Naive thymus-derived CD4-positive, alpha-beta T cell (primary cell): ENCODE measurements at regions of chr22 and their contacts with region 1.

Region 1: DNA sequence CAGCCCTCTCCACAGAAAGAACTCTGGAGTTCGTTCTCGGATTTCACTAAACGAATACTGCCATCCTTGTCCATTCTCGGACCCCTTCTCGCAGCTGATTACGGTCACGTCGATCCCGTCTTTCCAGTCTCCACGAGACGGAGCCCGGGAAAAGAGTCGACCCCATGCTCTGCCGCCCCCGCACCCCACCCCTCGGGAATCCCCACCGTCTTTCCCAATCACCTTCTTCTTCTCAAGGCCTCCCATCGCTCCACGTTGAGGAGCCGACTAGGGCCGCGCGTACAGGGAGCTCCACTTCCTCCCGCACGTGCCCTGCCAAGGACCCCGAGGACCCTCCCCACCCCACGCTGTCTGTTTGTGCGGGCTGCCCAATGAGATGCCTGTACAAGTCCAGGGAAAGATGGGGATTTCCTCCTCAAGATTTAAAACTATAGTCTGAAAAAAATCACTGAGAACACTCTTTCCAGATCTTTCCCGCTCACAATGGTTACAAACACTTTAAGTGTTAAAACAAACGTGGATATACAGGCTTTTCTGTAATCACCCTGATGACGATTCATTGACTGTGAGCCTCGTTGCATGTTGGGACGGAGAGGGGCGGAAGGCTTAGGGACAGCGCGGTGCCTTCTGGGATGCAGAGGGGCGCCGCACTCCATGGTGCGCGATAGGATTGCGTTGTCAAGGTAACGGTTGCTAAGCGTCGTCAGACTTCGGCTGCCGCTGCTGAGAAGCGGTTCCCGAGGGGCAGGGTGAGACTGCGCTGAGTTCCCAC is at the start of gene PES1:
- DNase-seq: peak; percentile 80 to 98 (median 96)
- ATAC-seq: peak; percentile 99
- H3K4me3 ChIP-seq: peak within 1 kb of the TSS; percentile 85
- H3K4me3 Mint-ChIP-seq: no peak within 1 kb of the TSS
- H3K27ac ChIP-seq: peak within 1 kb of the TSS; percentile 85
- H3K27ac Mint-ChIP-seq: no peak within 1 kb of the TSS
- H3K4me1 ChIP-seq: peaks cover 8 to 12% of the 10 kb centered on the region in 2 donors
- H3K4me1 Mint-ChIP-seq: peaks cover 0 to 12% (median 0%) of the 10 kb centered on the region in 7 donors
- H3K27me3 ChIP-seq: no peaks in the 10 kb centered on the region
- H3K27me3 Mint-ChIP-seq: peaks cover 0 to 23% (median 0%) of the 10 kb centered on the region in 5 donors
- total RNA-seq, gene PES1: 40.6 to 84.2 (median 56.3) TPM

Region 2: DNA sequence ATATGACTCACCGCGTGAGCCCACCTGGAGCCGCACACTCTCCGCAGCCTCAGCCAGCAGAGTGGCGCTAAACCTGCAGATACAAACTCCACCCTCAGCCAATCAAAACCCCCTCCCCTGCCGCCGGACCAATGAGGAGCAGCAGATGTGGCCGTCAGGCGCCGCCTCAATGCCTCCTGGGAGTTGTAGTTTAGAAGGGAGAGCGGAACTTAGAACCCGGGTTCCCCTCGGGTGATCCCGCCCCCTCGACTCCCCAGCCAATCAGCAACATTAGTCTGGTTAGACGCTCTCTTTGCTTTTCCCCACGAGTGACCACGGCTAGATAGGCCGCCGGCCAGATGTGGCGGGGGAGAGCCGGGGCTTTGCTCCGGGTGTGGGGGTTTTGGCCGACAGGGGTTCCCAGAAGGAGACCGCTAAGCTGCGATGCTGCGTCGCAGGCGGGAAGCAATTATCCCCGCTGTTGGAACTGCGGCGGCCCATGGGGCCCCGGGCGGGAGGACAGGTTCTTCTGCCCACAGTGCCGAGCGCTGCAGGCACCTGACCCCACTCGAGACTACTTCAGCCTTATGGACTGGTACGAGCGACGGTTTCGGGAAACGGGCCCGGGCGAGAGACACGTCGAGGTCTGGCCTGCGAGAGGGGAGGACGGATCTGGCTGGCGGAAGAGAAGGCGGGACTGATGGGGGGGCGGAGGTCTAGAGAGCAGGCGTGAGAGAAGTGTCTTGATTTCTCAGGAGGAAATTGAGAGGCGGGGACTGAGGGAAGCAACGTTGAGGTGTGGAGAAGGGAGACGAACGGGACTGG is 1849.8 kb before region 1 on chr22 and contains the starts of genes CHEK2 and HSCB:
- CTCF ChIA-PET with region 1: no interaction called
- POLR2A ChIA-PET with region 1: no interaction called
- intact Hi-C with region 1: loop called (anchors 5 kb)
- DNase-seq: peak; percentile 80 to 99 (median 96)
- ATAC-seq: peak; percentile 98
- H3K4me3 ChIP-seq: peak within 1 kb of the TSS; percentile 99
- H3K4me3 Mint-ChIP-seq: peak within 1 kb of the TSS; percentile 81 to 94 (median 87)
- H3K27ac ChIP-seq: peak within 1 kb of the TSS; percentile 90
- H3K27ac Mint-ChIP-seq: peak within 1 kb of the TSS; percentile 79 to 93 (median 89)
- H3K4me1 ChIP-seq: peaks cover 3 to 9% of the 10 kb centered on the region in 2 donors
- H3K4me1 Mint-ChIP-seq: peaks cover 14 to 49% (median 38%) of the 10 kb centered on the region in 7 donors
- H3K27me3 ChIP-seq: no peaks in the 10 kb centered on the region
- H3K27me3 Mint-ChIP-seq: no peaks in the 10 kb centered on the region
- total RNA-seq, gene CHEK2: 8.4 to 36.7 (median 10.6) TPM
- total RNA-seq, gene HSCB: 8.2 to 10.9 (median 9.0) TPM

Region 3: DNA sequence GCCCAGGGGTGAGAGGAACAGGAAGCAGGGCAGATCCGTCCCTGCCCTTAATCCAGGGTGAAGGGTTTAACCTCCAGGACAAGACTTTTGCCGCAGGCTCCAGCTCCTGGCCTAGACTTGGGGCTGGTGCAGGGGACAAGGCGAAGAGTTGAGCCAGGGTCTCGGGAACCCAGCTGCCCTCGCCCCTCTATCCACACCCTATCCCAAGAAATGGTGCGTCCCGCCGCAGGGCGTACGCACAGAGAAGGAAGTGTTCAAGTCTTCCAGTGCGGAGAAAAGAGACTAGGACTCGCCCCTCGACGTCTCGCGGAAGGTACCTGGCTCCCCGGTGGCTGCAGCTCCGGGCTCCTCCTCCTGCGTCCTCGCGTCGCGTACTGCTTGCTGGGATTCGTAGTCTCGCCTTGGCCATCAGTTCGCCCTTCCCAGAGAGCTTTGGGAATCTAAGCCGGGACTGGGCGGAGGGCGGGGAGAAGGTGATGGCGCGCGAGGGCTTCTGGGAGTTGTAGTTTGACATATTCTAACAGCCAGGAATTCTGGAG is 825.1 kb before region 1 on chr22 and contains the start of gene ZMAT5:
- CTCF ChIA-PET with region 1: no interaction called
- POLR2A ChIA-PET with region 1: no interaction called
- intact Hi-C with region 1: loop called in 1 of 2 experiments (anchors 1 kb)
- DNase-seq: peak; percentile 68 to 96 (median 93)
- ATAC-seq: peak; percentile 98
- H3K4me3 ChIP-seq: peak within 1 kb of the TSS; percentile 84
- H3K4me3 Mint-ChIP-seq: peak within 1 kb of the TSS; percentile 95 to 100 (median 99)
- H3K27ac ChIP-seq: peak within 1 kb of the TSS; percentile 88
- H3K27ac Mint-ChIP-seq: peak within 1 kb of the TSS; percentile 92 to 99 (median 97)
- H3K4me1 ChIP-seq: peaks cover 16 to 17% of the 10 kb centered on the region in 2 donors
- H3K4me1 Mint-ChIP-seq: peaks cover 21 to 59% (median 39%) of the 10 kb centered on the region in 7 donors
- H3K27me3 ChIP-seq: no peaks in the 10 kb centered on the region
- H3K27me3 Mint-ChIP-seq: no peaks in the 10 kb centered on the region
- total RNA-seq, gene ZMAT5: 12.9 to 26.4 (median 14.7) TPM

Region 4: DNA sequence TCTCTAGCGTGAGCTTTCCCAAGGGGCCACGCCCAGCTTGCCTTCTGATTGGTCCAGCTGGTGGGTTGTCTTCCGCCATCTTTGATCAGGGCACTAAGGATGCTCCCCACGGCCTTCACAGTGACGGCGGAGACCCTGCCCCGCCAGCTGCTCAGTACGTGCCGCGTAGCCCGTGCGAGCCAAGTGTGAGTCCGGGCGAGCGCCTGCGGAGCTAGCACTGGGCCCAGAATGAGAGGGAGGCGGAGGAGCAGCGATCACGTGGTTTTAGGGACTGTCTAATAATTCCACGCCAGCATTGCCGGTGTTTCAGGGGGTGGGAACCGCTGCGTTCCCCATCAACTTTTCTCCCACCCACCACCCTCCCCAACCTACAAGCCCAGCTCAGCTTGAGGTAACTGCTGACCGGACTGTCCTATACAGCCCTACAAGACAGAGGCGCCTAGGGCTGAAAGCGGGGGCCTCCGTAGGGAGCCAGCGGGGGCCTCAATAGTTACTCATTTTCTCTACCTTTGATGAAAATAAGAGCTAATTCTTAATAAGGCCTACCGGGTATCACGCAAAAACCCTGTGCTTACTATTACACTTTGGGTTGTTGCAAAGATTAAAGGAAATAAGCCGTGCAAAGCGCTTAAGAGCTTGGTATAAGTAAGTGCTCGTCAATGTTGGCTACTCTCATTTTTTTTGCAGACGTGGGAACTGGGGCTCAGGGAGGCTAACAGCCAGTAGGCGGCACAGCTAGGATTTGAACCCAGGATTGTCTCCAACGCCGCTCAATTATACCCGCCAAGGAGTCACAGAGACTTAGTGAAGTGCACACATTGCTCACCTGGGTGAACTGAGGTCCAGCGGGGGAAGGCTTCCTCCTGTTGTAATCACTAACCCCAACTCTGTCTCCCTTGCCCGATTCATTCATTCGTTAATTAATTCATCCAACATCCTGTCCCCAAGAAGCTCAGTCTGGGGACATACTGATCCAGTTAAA is 167.5 kb before region 1 on chr22:
- CTCF ChIA-PET with region 1: no interaction called
- POLR2A ChIA-PET with region 1: no interaction called
- intact Hi-C with region 1: loop called (anchors 1 kb)
- DNase-seq: peak; percentile 82 to 99 (median 98)
- ATAC-seq: peak; percentile 92
- H3K4me3 ChIP-seq: peak overlapping the region; percentile 76
- H3K4me3 Mint-ChIP-seq: peak overlapping the region; percentile 94 to 99 (median 98)
- H3K27ac ChIP-seq: peak overlapping the region; percentile 97
- H3K27ac Mint-ChIP-seq: peak overlapping the region; percentile 96 to 100 (median 98)
- H3K4me1 ChIP-seq: peaks cover 28 to 36% of the 10 kb centered on the region in 2 donors
- H3K4me1 Mint-ChIP-seq: peaks cover 30 to 71% (median 64%) of the 10 kb centered on the region in 7 donors
- H3K27me3 ChIP-seq: no peaks in the 10 kb centered on the region
- H3K27me3 Mint-ChIP-seq: peaks cover 0 to 4% (median 0%) of the 10 kb centered on the region in 5 donors

Region 5: DNA sequence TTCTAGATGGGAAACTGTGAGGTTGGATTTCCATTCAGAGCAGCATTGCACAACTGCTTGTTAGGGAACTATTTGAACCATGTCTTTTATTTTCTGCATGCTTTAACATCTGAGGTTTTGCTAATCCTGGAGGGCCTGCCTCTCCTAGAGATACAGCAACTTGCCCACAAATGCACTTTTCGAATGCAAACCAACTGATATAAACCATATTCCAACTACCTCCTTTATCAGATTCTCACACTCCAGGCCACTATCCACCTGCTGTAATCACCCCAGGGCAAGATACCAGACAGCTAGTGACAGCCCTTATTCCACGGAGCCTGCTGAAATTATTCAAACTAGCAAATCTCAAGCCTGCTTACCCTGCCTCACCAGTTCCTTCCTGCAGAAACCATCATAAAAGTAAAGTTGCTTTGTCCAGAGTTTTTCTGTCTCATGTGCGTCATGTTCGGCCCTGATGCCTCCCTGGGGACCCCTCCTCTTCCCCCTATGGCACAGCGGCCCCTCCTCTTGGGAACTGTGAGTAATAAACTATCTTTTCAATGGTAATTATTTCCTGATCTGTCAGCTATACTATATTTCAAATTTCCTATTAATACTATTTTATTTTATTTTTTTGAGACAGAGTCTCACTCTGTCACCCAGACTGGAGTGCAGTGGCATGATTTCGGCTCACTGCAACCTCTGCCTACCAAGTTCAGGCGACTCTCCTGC is 67.8 kb before region 1 on chr22:
- CTCF ChIA-PET with region 1: no interaction called
- POLR2A ChIA-PET with region 1: no interaction called
- intact Hi-C with region 1: no loop called
- DNase-seq: no peak
- ATAC-seq: no peak
- H3K4me3 ChIP-seq: no peak overlapping the region
- H3K4me3 Mint-ChIP-seq: no peak overlapping the region
- H3K27ac ChIP-seq: no peak overlapping the region
- H3K27ac Mint-ChIP-seq: no peak overlapping the region
- H3K4me1 ChIP-seq: no peaks in the 10 kb centered on the region
- H3K4me1 Mint-ChIP-seq: peaks cover 0 to 2% (median 0%) of the 10 kb centered on the region in 7 donors
- H3K27me3 ChIP-seq: no peaks in the 10 kb centered on the region
- H3K27me3 Mint-ChIP-seq: peaks cover 0 to 9% (median 3%) of the 10 kb centered on the region in 5 donors

Region 6: GRCh38 chr22:30694640-30695350 is 103.0 kb after region 1 on chr22 and contains the start of gene OSBP2:
- CTCF ChIA-PET with region 1: no interaction called
- POLR2A ChIA-PET with region 1: no interaction called
- intact Hi-C with region 1: no loop called
- DNase-seq: peak in 7 of 9 donors; percentile 14 to 45 (median 29)
- ATAC-seq: peak; percentile 69
- H3K4me3 ChIP-seq: peak within 1 kb of the TSS; percentile 77
- H3K4me3 Mint-ChIP-seq: peak within 1 kb of the TSS; percentile 86 to 98 (median 94)
- H3K27ac ChIP-seq: peak within 1 kb of the TSS; percentile 57
- H3K27ac Mint-ChIP-seq: peak within 1 kb of the TSS; percentile 17 to 92 (median 86)
- H3K4me1 ChIP-seq: peaks cover 6 to 7% of the 10 kb centered on the region in 2 donors
- H3K4me1 Mint-ChIP-seq: peaks cover 0 to 29% (median 19%) of the 10 kb centered on the region in 7 donors
- H3K27me3 ChIP-seq: no peaks in the 10 kb centered on the region
- H3K27me3 Mint-ChIP-seq: peaks cover 0 to 39% (median 4%) of the 10 kb centered on the region in 5 donors
- total RNA-seq, gene OSBP2: 1.2 to 2.7 (median 2.2) TPM

Region 7: DNA sequence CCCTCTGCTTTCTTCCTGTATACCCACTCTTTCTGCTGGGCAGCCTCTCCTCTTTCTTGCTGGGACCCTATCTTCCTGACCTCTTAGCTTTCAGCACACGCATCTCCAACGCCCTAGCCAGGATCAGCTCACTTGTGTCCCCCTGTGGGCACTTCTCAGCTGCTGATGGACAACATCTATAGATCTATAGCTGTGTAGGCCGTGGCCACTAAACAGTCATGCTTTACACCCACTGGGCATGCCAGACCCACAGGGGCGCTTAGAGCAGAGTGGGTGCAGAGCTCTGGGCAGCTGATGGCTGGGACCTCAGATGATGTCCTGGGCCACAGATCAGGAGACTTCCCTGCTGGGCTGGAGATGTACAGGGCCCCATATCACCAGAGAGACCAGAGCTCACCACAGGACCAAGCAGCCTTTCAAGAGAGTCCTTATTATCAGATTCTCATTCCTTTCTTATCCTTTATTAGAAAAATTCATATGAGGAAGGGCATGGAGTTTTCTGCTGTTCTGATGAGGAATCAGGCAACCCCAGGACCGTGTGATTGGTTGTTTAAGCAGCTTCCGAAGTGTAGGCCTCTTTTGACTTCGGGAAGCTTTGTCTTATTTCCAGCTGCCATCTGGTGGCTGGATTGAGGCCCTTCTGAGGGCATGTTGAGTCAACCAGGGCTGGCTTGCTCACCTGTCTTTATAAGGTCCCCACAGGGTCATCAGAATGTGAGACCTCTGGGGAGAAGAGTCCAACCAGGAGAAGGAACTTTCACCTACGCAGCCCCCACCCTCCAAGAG is 163.4 kb after region 1 on chr22:
- CTCF ChIA-PET with region 1: no interaction called
- POLR2A ChIA-PET with region 1: no interaction called
- intact Hi-C with region 1: no loop called
- DNase-seq: peak in 8 of 9 donors; percentile 12 to 44 (median 30)
- ATAC-seq: peak; percentile 67
- H3K4me3 ChIP-seq: no peak overlapping the region
- H3K4me3 Mint-ChIP-seq: no peak overlapping the region
- H3K27ac ChIP-seq: no peak overlapping the region
- H3K27ac Mint-ChIP-seq: no peak overlapping the region
- H3K4me1 ChIP-seq: no peaks in the 10 kb centered on the region
- H3K4me1 Mint-ChIP-seq: peaks cover 0 to 3% (median 0%) of the 10 kb centered on the region in 7 donors
- H3K27me3 ChIP-seq: no peaks in the 10 kb centered on the region
- H3K27me3 Mint-ChIP-seq: peaks cover 0 to 4% (median 0%) of the 10 kb centered on the region in 5 donors

Region 8: DNA sequence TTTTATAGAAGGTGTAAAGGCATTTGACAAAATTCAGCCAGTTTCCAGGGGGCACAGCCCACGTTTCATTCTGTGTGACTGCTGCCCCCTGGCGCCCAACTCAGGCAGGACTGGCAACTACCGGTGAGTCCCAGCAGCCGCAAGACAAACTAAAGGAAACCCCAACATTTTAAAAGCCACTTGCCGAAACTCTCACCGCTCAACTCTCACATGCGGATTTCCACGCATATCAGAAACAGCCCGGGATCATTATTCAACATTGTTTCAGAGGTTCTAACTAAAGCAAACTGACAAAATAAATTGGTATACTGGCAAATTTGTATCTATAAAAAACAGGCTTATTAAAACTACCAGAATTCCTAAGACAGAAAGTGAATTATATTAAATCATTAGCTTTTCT is 328.6 kb after region 1 on chr22:
- CTCF ChIA-PET with region 1: no interaction called
- POLR2A ChIA-PET with region 1: no interaction called
- intact Hi-C with region 1: loop called in 1 of 2 experiments (anchors 1 kb)
- DNase-seq: peak; percentile 65 to 84 (median 78)
- ATAC-seq: peak; percentile 88
- H3K4me3 ChIP-seq: no peak overlapping the region
- H3K4me3 Mint-ChIP-seq: peak overlapping the region; percentile 62 to 89 (median 77)
- H3K27ac ChIP-seq: peak overlapping the region; percentile 43
- H3K27ac Mint-ChIP-seq: peak overlapping the region; percentile 5 to 90 (median 28)
- H3K4me1 ChIP-seq: peaks cover 6 to 16% of the 10 kb centered on the region in 2 donors
- H3K4me1 Mint-ChIP-seq: peaks cover 4 to 29% (median 21%) of the 10 kb centered on the region in 7 donors
- H3K27me3 ChIP-seq: no peaks in the 10 kb centered on the region
- H3K27me3 Mint-ChIP-seq: peaks cover 0 to 2% (median 0%) of the 10 kb centered on the region in 5 donors

Region 9: GRCh38 chr22:31278622-31279326 is 687.0 kb after region 1 on chr22:
- CTCF ChIA-PET with region 1: no interaction called
- POLR2A ChIA-PET with region 1: no interaction called
- intact Hi-C with region 1: loop called in 1 of 2 experiments (anchors 5 kb)
- DNase-seq: peak in 7 of 9 donors; percentile 67 to 85 (median 79)
- ATAC-seq: peak; percentile 75
- H3K4me3 ChIP-seq: peak overlapping the region; percentile 35
- H3K4me3 Mint-ChIP-seq: peak overlapping the region; percentile 74 to 97 (median 80)
- H3K27ac ChIP-seq: peak overlapping the region; percentile 100
- H3K27ac Mint-ChIP-seq: peak overlapping the region; percentile 96 to 100 (median 99)
- H3K4me1 ChIP-seq: peaks cover 33 to 94% of the 10 kb centered on the region in 2 donors
- H3K4me1 Mint-ChIP-seq: peaks cover 52 to 98% (median 94%) of the 10 kb centered on the region in 7 donors
- H3K27me3 ChIP-seq: no peaks in the 10 kb centered on the region
- H3K27me3 Mint-ChIP-seq: no peaks in the 10 kb centered on the region

Region 10: GRCh38 chr22:31302006-31302405 is 710.2 kb after region 1 on chr22:
- CTCF ChIA-PET with region 1: no interaction called
- POLR2A ChIA-PET with region 1: no interaction called
- intact Hi-C with region 1: no loop called
- DNase-seq: no peak
- ATAC-seq: no peak
- H3K4me3 ChIP-seq: no peak overlapping the region
- H3K4me3 Mint-ChIP-seq: no peak overlapping the region
- H3K27ac ChIP-seq: no peak overlapping the region
- H3K27ac Mint-ChIP-seq: peak overlapping the region in 2 of 9 donors; percentile 5 to 55
- H3K4me1 ChIP-seq: peaks cover 2 to 12% of the 10 kb centered on the region in 2 donors
- H3K4me1 Mint-ChIP-seq: peaks cover 15 to 73% (median 48%) of the 10 kb centered on the region in 7 donors
- H3K27me3 ChIP-seq: no peaks in the 10 kb centered on the region
- H3K27me3 Mint-ChIP-seq: peaks cover 0 to 3% (median 0%) of the 10 kb centered on the region in 5 donors